Activated naive CD8-positive, alpha-beta T cell treated with anti-CD3 and anti-CD28 coated beads, Interleukin-2, amount 10 ng/mL, durations not matched to agents 7 days and 5 days (primary cell): ENCODE measurements at regions of chr17 and their contacts with region 1.

Region 1: DNA sequence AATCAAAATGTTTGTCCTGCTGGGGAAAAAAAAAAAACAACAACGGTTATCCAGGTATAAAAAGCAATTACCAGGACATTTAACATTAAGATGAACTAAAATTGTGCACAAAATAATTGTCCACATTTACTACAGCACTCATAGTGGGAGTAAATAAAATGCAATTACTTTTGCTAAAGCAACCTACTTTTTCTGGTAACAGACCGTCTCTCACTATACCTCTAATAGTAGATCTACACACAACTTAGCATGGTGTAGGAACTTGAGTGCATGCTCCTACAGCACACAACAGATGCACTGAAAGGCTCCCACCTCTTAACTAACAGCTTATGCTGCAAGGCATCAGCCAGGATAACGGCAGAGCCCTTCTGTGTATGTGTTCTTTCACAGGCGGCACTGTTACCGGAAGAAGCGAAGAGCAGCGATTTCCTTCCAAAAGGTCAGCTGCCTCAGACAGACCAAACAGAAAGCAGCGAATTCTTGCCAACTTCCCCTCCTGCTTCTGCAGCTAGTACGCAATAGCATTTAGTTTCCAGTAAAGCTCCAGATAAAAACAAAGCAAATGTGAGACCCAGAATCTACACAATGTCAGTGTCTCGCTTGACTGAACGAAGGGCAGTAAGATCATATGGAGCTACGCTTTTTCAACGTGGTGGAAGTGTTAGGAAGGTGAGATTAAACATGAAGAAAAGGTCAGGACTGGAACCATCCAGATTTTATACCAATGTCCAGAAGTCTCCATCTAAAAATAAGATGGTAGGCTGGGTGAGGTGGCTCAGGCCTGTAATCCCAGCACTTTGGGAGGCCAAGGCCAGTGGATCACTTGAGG is 27.6 kb downstream of the STAT5B start:
- DNase-seq: peak; percentile 59
- ATAC-seq: peak; percentile 96
- H3K4me3 Mint-ChIP-seq: peak overlapping the region; percentile 94
- H3K27ac Mint-ChIP-seq: peak overlapping the region; percentile 98
- H3K4me1 Mint-ChIP-seq: peaks cover 52% of the 10 kb centered on the region
- H3K27me3 Mint-ChIP-seq: no peaks in the 10 kb centered on the region

Region 2: GRCh38 chr17:42153919-42154742 is 94.4 kb before region 1 on chr17:
- POLR2A ChIA-PET with region 1: no interaction called
- DNase-seq: no peak
- ATAC-seq: no peak
- H3K4me3 Mint-ChIP-seq: peak overlapping the region; percentile 96
- H3K27ac Mint-ChIP-seq: peak overlapping the region; percentile 86
- H3K4me1 Mint-ChIP-seq: peaks cover 24% of the 10 kb centered on the region
- H3K27me3 Mint-ChIP-seq: no peaks in the 10 kb centered on the region

Region 3: DNA sequence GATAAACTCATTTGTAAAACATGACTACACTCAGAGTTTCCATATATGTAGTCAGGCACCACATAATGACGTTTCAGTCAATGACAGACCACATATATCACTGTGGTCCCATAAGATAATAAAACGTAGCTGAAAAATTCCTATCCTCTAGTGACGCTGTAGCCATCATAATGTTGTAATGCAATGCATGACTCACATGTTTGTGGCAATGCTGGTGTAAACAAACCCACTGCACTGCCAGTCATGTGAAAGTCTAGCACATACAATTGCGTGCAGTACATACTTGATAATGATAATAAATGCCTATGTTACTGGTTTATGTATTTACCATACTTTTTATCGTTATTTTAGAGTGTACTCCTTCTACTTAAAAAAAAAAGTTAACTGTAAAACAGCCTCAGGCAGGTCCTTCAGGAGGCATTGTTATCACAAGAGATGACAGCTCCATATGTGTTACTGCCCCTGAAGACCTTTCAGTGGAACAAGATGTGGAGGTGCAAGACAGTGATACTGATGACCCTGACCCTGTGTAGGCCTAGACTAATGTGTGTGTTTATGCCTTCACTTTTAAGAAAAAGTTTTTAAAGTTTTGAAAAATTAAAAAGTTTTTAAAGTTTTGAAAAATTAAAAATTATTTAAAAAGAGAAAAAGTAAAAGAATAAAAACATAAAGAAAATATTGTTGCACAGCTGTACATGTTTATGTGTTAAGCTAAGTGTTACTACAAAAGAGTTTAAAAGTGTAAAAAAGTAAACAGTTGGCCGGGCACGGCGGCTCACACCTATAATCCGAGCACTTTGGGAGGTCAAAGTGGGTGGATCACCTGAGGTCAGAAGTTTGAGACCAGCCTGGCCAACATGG is 18.6 kb after region 1 on chr17:
- POLR2A ChIA-PET with region 1: interaction called, 28 read pairs
- DNase-seq: no peak
- ATAC-seq: peak; percentile 66
- H3K4me3 Mint-ChIP-seq: no peak overlapping the region
- H3K27ac Mint-ChIP-seq: peak overlapping the region; percentile 63
- H3K4me1 Mint-ChIP-seq: peaks cover 36% of the 10 kb centered on the region
- H3K27me3 Mint-ChIP-seq: no peaks in the 10 kb centered on the region

Region 4: GRCh38 chr17:42276359-42276608 is 27.7 kb after region 1 on chr17 and contains the start of gene STAT5B:
- POLR2A ChIA-PET with region 1: interaction called, 62 read pairs
- DNase-seq: peak; percentile 91
- ATAC-seq: peak; percentile 72
- H3K4me3 Mint-ChIP-seq: peak within 1 kb of the TSS; percentile 91
- H3K27ac Mint-ChIP-seq: peak within 1 kb of the TSS; percentile 91
- H3K4me1 Mint-ChIP-seq: peaks cover 41% of the 10 kb centered on the region
- H3K27me3 Mint-ChIP-seq: no peaks in the 10 kb centered on the region
- total RNA-seq, gene STAT5B: 131 to 134 TPM